AG04449 (cell line): ENCODE measurements at regions of chr15 and their contacts with region 1.

Region 1: DNA sequence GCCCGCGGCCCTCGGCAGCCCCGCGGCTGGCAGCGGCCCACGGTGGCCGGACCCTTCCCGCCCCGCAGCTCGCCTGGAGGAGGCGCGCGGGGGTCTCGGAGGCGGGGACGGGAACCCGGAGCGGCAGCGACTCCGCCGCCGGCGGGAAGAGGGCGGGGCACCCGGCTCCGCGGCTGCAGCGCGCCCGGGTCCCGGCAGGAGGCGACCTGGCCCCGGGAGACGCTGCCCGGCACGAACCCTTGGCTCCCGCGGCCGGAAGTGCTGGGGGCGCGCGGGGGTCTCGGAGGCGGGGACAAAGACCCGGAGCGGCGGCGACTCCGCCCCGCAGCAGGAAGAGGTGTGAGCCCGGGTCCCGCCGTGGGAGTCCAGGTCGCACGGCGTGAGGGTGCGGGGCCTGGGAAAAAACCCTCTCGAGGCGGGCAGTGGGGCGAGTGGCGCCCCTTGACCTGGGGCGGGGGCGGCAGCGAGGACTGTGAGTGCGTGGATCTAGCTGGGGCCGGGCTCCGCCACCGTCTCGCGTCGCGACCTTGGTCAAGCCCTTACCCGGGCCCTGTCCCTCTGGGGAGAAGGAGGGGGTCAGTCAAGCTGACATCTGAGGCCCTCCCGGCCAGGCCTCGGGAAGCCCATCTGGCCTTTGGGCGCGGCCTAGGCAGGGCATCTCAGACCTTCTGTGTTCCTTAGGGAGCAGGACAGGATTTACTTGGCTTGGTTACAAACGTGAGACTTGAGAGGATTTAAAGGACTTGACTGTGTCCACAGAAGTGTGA is at the start of gene CIB2:
- DNase-seq: no peak
- H3K4me3 ChIP-seq: peak within 1 kb of the TSS; percentile 76
- CTCF ChIP-seq: peak; percentile 76

Region 2: DNA sequence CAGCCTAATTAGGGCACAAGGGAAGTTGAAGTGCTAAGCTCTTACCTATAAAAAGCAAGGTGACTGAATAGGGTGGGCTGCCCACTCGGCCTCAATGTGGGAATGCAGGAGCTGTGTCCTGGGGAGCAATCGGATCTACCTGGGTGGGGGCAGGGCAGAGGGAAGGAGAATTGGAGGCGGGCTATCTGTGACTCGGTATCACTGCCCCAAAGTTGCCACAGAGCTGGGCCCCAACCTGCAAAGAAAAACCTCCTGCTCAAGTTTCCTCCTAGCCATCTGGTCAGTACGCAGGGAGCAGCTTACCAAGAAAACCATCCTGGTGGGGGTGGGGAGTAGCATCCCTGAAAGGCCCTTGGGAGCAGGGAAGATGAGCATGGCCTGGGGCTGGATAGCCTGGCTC is 11.0 kb before region 1 on chr15:
- CTCF ChIA-PET with region 1: interaction called, 117 read pairs
- POLR2A ChIA-PET with region 1: no interaction called
- DNase-seq: no peak
- H3K4me3 ChIP-seq: no peak overlapping the region
- CTCF ChIP-seq: no peak

Region 3: DNA sequence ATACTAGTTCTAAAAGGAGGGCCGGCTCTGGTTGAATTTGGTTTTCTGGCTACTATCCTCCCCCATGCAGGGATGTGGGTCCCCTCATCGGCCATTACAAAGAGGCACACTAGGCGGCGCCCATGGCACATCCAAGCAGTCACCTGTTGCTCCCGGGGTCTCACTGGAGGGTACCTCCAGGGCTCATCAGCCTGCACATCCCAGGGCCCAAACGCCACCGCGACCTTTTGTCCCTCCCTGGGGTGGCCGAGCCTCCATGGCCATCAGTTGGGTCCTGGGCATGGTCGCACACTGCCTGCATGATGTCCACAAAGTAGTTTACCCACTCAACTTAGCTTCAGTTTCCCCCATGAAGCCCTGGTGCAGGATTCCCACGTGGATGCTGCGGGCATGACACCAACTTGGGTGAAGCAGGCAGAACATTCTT is 46.0 kb after region 1 on chr15:
- CTCF ChIA-PET with region 1: interaction called, 14 read pairs
- POLR2A ChIA-PET with region 1: no interaction called
- DNase-seq: no peak
- H3K4me3 ChIP-seq: no peak overlapping the region
- CTCF ChIP-seq: peak; percentile 74

Region 4: GRCh38 chr15:78265752-78266593 is 134.5 kb after region 1 on chr15:
- CTCF ChIA-PET with region 1: no interaction called
- POLR2A ChIA-PET with region 1: no interaction called
- DNase-seq: peak; percentile 52
- H3K4me3 ChIP-seq: no peak overlapping the region
- CTCF ChIP-seq: no peak

Region 5: GRCh38 chr15:78767331-78767951 is 636.0 kb after region 1 on chr15:
- CTCF ChIA-PET with region 1: no interaction called
- POLR2A ChIA-PET with region 1: no interaction called
- DNase-seq: no peak
- H3K4me3 ChIP-seq: no peak overlapping the region
- CTCF ChIP-seq: no peak